ENCODE measurements at regions of chr15 and their contacts with region 1.

Region 1: DNA sequence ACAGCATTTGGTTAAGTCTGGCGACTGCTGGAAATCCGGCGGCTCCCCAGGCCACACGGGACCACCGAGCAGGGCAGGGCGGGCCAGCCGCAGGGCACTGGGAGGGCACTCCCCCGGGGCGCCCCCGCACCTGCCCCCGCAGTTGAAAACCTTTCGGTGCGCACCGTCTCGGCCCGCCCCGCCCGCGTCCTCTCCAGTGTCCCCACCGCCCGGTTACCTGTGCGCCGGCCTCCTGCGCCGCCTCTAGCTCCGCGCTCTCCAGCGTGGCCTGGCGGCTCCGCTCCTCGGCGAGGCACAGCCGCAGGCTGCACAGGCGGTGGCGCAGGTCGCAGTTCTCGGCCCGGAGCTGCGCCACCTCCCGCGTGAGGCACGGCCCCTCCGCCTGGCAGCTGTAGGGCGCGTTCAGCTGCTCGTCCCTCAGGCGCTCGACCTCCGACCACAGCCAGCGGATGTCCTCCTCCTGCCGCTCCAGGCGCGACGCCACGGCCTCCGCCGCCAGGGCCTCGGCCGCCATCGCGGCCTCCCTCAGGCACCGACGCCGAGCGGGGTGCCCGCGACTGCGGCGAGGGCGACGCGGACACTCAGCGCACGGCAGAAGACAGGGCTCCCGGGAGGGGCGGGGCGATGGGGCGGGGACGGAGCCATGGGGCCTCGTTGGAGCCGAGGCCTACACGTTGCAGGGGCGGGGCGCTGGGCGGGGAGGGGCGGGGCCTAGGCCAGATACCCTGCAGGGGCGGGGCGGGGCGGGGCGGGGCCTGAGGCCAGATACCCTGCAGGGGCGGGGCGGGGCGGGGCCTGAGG is at the start of gene TARS3:
- DNase-seq: peak; percentile 80
- ATAC-seq: peak; percentile 98
- H3K4me3 ChIP-seq: peak within 1 kb of the TSS; percentile 100
- H3K27ac ChIP-seq: peak within 1 kb of the TSS; percentile 97
- H3K4me1 ChIP-seq: no peaks in the 10 kb centered on the region
- H3K27me3 ChIP-seq: no peaks in the 10 kb centered on the region
- CTCF ChIP-seq: 0 out of 2 replicates have a peak, but pooled peaks have one; percentile 21
- POLR2A ChIP-seq: peak; percentile 92
- RAD21 ChIP-seq: peak; percentile 21; the same call in 1 of the 2 replicates
- total RNA-seq, gene TARS3: 9.3 and 10.0 TPM in 2 replicates

Region 2: DNA sequence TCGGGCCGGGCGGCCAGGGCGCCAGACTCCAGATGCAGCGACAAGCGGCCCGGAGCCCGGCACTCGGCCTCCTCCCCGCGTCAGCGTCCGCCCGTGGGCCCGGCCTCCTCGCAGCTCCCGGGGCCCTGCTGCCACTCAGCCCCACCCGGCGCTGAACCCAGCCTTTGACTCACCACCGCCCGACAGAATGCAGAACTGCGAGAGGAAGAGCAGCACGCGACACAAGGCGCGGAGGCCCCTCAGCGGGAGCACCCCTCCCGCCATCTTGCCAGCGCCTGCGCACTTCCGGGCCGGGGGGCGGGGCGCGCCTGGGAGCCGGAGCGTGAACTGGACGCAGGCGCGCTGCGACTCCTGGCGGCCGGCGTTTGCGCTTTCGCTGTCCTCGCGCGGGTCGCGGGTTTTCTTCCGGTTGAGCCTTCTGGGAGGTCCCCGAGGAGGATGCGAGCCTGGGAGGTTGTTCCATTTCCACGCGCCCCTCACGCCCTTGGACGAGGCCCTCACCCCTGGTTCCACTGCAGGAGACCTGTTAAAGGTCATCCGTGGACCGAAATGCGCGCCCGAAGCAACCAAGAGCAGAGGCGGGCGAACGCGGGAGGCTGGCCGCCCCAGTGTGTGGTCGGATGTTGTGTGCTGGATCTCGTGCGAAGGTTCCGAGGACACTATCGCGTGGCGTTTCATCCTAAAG is 71.8 kb before region 1 on chr15 and contains the start of gene TM2D3:
- CTCF ChIA-PET with region 1: no interaction called
- POLR2A ChIA-PET with region 1: no interaction called
- dilution Hi-C with region 1: no loop called
- in situ Hi-C with region 1: no loop called
- intact Hi-C with region 1: loop called (anchors 5 kb)
- DNase-seq: peak; percentile 88
- ATAC-seq: peak; percentile 96
- H3K4me3 ChIP-seq: peak within 1 kb of the TSS; percentile 100
- H3K27ac ChIP-seq: peak within 1 kb of the TSS; percentile 96
- H3K4me1 ChIP-seq: peaks cover 5% of the 10 kb centered on the region
- H3K27me3 ChIP-seq: no peaks in the 10 kb centered on the region
- CTCF ChIP-seq: peak; percentile 77
- POLR2A ChIP-seq: peak; percentile 81
- RAD21 ChIP-seq: peak; percentile 55
- total RNA-seq, gene TM2D3: 27.4 and 30.6 TPM in 2 replicates

Region 3: DNA sequence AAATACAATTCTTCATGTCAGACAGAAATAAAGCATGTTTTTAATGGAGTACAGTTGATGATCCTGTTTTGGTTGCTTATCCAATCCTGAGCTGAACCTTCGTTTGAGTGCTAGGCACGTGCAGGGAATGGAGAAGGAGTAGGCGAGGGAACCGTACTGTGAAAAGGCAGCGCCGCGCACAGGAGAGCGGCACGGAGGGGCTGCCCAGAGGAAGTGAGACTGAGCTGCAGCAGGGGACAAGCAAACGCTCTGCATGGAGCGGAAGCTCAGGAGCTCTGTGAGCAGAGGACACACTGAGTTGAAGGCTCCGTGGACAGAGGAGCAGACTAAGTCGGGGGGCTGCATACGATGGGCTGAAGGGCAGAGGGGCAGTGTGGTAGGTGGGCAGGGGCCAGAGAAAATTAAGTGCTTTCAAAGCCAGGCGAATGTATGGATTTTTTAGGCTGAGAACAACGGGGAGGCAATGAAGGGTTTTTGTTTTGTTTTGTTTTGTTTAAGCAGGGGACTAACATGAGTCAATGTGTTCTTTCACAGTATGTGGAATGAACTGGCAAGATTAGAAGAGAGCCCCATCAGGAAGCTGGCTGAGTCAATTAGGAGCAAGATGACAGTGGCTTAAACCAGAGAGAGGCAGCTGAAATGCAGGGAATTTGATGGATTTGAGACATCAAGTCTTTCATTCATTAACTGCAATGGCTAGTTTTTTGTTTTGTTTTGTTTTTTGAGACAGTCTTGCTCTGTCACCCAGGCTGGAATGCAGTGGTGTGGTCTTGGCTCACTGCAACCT is 48.1 kb before region 1 on chr15:
- CTCF ChIA-PET with region 1: interaction called, 4 read pairs
- POLR2A ChIA-PET with region 1: no interaction called
- dilution Hi-C with region 1: no loop called
- in situ Hi-C with region 1: no loop called
- intact Hi-C with region 1: loop called (anchors 5 kb)
- DNase-seq: peak; percentile 89
- ATAC-seq: peak; percentile 66
- H3K4me3 ChIP-seq: no peak overlapping the region
- H3K27ac ChIP-seq: peak overlapping the region; percentile 88
- H3K4me1 ChIP-seq: peaks cover 13% of the 10 kb centered on the region
- H3K27me3 ChIP-seq: no peaks in the 10 kb centered on the region
- CTCF ChIP-seq: no peak
- POLR2A ChIP-seq: no peak
- RAD21 ChIP-seq: no peak

Region 4: GRCh38 chr15:101827257-101827656 is 103.2 kb after region 1 on chr15:
- CTCF ChIA-PET with region 1: no interaction called
- POLR2A ChIA-PET with region 1: no interaction called
- dilution Hi-C with region 1: no loop called
- in situ Hi-C with region 1: no loop called
- intact Hi-C with region 1: no loop called
- DNase-seq: peak; percentile 92
- ATAC-seq: peak; percentile 94
- H3K4me3 ChIP-seq: no peak overlapping the region
- H3K27ac ChIP-seq: no peak overlapping the region; the same call in 1 of the 2 replicates
- H3K4me1 ChIP-seq: no peaks in the 10 kb centered on the region
- H3K27me3 ChIP-seq: no peaks in the 10 kb centered on the region
- CTCF ChIP-seq: no peak
- POLR2A ChIP-seq: no peak
- RAD21 ChIP-seq: no peak